MCF 10A (cell line): ENCODE measurements at regions of chrX and their contacts with region 1.

Region 1: GRCh38 chrX:40097497-40098263 is at the start of gene BCOR:
- DNase-seq: peak; percentile 50
- H3K4me3 Mint-ChIP-seq: peak within 1 kb of the TSS; percentile 80
- H3K27ac Mint-ChIP-seq: no peak within 1 kb of the TSS
- H3K4me1 Mint-ChIP-seq: no peaks in the 10 kb centered on the region
- H3K27me3 Mint-ChIP-seq: peaks cover 4% of the 10 kb centered on the region
- CTCF ChIP-seq: no peak
- total RNA-seq, gene BCOR: 7.5 and 12.0 TPM in 2 replicates

Region 2: DNA sequence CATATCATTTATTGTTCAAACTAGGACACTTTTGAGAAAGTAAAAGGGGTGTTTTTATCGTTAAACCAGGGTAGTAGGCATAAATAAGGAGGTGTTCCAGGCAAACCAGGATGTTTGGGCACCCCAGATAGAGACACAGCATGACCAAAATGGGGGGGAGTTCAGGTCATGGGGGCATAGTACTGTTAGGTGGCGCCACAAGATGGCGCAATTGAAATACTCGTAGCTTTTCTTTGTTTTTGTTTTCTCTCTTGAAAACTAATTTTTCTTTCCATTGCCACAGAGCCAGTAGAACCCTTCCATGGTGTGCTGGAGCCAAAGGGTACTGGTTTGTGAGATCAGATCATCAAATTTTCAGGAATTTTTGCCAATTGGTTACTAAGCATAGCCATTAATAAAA is 283.3 kb before region 1 on chrX:
- CTCF ChIA-PET with region 1: no interaction called
- POLR2A ChIA-PET with region 1: interaction called, 3 read pairs
- intact Hi-C with region 1: loop called (anchors 5 kb)
- DNase-seq: peak; percentile 51
- H3K4me3 Mint-ChIP-seq: no peak overlapping the region
- H3K27ac Mint-ChIP-seq: peak overlapping the region; percentile 4
- H3K4me1 Mint-ChIP-seq: peaks cover 15% of the 10 kb centered on the region
- H3K27me3 Mint-ChIP-seq: peaks cover 58% of the 10 kb centered on the region
- CTCF ChIP-seq: peak; percentile 45

Region 3: GRCh38 chrX:39953883-39954282 is 143.8 kb before region 1 on chrX:
- CTCF ChIA-PET with region 1: no interaction called
- POLR2A ChIA-PET with region 1: interaction called, 9 read pairs
- intact Hi-C with region 1: loop called (anchors 5 kb)
- DNase-seq: peak; percentile 90
- H3K4me3 Mint-ChIP-seq: peak overlapping the region; percentile 68
- H3K27ac Mint-ChIP-seq: peak overlapping the region; percentile 63
- H3K4me1 Mint-ChIP-seq: peaks cover 35% of the 10 kb centered on the region
- H3K27me3 Mint-ChIP-seq: peaks cover 53% of the 10 kb centered on the region
- CTCF ChIP-seq: no peak

Region 4: DNA sequence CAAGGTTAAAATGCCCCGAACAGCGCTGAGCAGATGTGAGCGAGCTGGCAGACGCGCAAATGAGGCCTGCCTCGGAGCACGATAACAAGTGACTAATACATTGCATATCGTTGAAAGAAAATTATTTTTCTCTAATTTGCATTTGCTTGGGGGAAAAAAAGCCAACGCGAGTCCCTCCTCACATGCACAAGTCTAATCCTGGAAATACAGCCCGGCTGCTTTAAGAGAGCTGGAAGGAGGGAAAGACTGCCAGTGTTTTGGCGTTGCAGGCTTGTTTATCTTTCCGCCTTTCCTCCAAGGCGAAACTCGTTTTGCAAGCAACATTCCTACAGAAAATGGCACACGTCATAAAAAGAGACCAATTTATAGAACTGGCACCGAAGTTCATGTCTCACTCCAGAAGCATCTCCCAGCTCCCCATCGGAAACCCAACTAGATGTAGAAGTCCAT is 12.6 kb before region 1 on chrX:
- CTCF ChIA-PET with region 1: interaction called, 5 read pairs
- POLR2A ChIA-PET with region 1: interaction called, 23 read pairs
- intact Hi-C with region 1: no loop called
- DNase-seq: peak; percentile 71
- H3K4me3 Mint-ChIP-seq: peak overlapping the region; percentile 38
- H3K27ac Mint-ChIP-seq: no peak overlapping the region
- H3K4me1 Mint-ChIP-seq: peaks cover 5% of the 10 kb centered on the region
- H3K27me3 Mint-ChIP-seq: peaks cover 50% of the 10 kb centered on the region
- CTCF ChIP-seq: no peak

Region 5: DNA sequence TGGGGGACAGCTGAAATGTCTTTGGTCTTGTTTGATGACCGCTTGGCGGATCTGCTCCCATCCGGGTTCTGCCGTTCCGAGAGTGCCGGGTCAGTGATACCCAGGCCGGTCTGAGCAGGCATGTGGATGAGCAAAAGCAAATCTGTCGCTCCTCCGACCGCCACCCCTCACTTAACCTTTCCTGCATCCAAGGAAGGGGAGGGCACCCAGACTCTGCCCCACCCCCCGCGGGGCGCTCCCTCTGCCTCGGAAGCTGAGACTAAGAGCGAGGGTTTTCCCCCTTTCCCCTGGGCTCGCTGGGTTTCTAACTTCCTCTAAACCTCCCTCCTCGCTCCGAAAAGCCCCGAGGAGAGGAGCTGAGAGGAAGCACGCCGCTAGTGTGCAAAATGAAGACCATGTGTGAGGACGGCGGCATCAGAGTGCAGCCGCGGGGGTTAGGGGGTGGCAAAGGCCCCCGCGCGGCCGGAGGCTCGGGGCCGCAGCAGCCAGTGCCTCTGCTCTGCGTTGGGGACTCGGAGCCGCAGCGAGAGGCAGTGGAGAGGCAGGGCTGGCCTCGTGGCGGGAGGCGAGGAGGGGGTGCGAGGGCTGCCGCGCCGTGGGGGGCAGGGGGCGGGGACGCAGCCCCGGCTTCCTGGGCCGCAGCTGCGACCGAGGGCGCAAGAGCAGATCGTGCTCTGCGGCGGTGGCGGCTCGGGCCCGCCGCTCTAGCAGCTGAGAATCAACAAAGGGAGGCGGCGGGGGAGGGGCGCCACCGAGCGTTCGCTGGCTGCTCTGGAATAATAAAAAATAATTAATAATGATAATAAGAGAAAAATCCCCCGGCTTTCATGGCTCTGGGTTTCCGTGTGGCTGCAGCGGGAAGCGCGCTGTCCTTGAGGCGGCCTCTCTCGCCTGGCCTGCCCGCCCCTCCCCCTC is 55.9 kb after region 1 on chrX:
- CTCF ChIA-PET with region 1: no interaction called
- POLR2A ChIA-PET with region 1: interaction called, 14 read pairs
- intact Hi-C with region 1: loop called (anchors 5 kb)
- DNase-seq: peak; percentile 49
- H3K4me3 Mint-ChIP-seq: peak overlapping the region; percentile 62
- H3K27ac Mint-ChIP-seq: no peak overlapping the region
- H3K4me1 Mint-ChIP-seq: no peaks in the 10 kb centered on the region
- H3K27me3 Mint-ChIP-seq: no peaks in the 10 kb centered on the region
- CTCF ChIP-seq: no peak

Region 6: GRCh38 chrX:40759374-40759773 is 661.7 kb after region 1 on chrX:
- CTCF ChIA-PET with region 1: no interaction called
- POLR2A ChIA-PET with region 1: no interaction called
- intact Hi-C with region 1: no loop called
- DNase-seq: no peak
- H3K4me3 Mint-ChIP-seq: no peak overlapping the region
- H3K27ac Mint-ChIP-seq: no peak overlapping the region
- H3K4me1 Mint-ChIP-seq: no peaks in the 10 kb centered on the region
- H3K27me3 Mint-ChIP-seq: peaks cover 78% of the 10 kb centered on the region
- CTCF ChIP-seq: no peak